ENCODE measurements at regions of chr11 and their contacts with region 1.

Region 1: GRCh38 chr11:122721964-122722266 is 66.4 kb downstream of the UBASH3B start:
- DNase-seq: peak; percentile 52 to 82
- H3K4me3 ChIP-seq: no peak overlapping the region
- H3K27ac ChIP-seq: peak overlapping the region; percentile 41; the same call in 1 of the 2 replicates
- H3K4me1 ChIP-seq: peaks cover 49% of the 10 kb centered on the region
- H3K27me3 ChIP-seq: no peaks in the 10 kb centered on the region
- CTCF ChIP-seq: no peak

Region 2: DNA sequence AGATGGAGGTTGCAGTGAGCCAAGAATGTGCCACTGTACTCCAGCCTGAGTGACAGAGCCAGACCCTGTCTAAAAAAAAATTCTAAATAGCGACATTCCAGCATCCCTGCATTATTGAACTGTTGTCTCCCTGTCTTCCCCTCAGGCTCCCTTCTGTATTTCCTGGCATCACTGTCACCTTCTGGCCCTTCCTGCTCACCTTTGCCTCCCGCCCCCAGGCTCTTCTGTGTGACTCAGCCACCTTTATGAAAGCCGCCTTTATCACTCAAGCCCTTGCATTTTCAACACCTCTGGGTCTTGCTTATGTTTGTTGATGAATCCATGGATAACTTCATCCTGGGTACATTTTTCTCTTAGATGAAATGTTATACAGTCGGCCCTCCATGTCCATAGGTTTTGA is 45.3 kb before region 1 on chr11:
- CTCF ChIA-PET with region 1: no interaction called
- POLR2A ChIA-PET with region 1: no interaction called
- intact Hi-C with region 1: loop called (anchors 1 kb)
- DNase-seq: peak; percentile 87 to 99
- H3K4me3 ChIP-seq: no peak overlapping the region
- H3K27ac ChIP-seq: peak overlapping the region; percentile 91
- H3K4me1 ChIP-seq: peaks cover 79% of the 10 kb centered on the region
- H3K27me3 ChIP-seq: no peaks in the 10 kb centered on the region
- CTCF ChIP-seq: no peak

Region 3: DNA sequence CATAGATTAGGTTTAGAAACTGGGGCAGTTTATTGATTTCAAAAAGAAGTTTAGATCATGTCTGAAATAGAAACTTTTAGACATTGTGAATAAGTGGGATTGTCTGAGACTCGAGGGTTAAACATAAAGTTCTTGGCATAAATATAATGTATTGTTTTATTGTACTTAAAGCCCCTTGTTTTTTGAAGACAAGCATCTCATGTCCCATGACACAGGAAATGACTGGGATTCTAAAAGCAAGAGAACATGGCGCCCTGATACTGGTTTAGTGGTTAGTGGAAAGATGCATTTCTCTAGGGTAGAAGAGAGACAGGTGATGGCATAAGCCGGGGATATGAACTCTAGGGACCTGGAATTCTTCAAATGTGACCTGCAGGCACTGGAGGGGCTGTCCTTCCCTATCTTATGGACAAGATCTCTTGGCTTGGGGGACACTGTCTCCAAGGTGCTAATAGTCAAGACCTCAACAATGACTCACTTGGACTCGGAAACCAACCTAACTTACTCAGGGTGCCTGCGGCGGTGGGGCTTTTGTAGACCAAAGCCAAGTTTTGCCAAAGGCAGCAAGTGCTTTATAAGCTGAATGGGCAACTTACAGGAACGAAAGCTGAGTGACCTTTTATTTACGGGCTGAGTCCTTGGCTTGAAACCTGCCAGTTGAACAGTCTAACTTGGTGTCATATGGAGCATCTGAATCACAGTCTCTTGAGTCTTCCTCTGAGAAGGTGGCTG is 18.2 kb before region 1 on chr11:
- CTCF ChIA-PET with region 1: no interaction called
- POLR2A ChIA-PET with region 1: no interaction called
- intact Hi-C with region 1: loop called (anchors 2 kb)
- DNase-seq: peak in 1 of 2 experiments; percentile 88
- H3K4me3 ChIP-seq: no peak overlapping the region
- H3K27ac ChIP-seq: peak overlapping the region; percentile 12; the same call in 1 of the 2 replicates
- H3K4me1 ChIP-seq: peaks cover 35% of the 10 kb centered on the region
- H3K27me3 ChIP-seq: no peaks in the 10 kb centered on the region
- CTCF ChIP-seq: no peak

Region 4: GRCh38 chr11:122788781-122789535 is 67.0 kb after region 1 on chr11:
- CTCF ChIA-PET with region 1: interaction called, 12 read pairs
- POLR2A ChIA-PET with region 1: no interaction called
- intact Hi-C with region 1: no loop called
- DNase-seq: no peak
- H3K4me3 ChIP-seq: no peak overlapping the region
- H3K27ac ChIP-seq: no peak overlapping the region
- H3K4me1 ChIP-seq: peaks cover 22% of the 10 kb centered on the region
- H3K27me3 ChIP-seq: no peaks in the 10 kb centered on the region
- CTCF ChIP-seq: peak; percentile 59

Region 5: DNA sequence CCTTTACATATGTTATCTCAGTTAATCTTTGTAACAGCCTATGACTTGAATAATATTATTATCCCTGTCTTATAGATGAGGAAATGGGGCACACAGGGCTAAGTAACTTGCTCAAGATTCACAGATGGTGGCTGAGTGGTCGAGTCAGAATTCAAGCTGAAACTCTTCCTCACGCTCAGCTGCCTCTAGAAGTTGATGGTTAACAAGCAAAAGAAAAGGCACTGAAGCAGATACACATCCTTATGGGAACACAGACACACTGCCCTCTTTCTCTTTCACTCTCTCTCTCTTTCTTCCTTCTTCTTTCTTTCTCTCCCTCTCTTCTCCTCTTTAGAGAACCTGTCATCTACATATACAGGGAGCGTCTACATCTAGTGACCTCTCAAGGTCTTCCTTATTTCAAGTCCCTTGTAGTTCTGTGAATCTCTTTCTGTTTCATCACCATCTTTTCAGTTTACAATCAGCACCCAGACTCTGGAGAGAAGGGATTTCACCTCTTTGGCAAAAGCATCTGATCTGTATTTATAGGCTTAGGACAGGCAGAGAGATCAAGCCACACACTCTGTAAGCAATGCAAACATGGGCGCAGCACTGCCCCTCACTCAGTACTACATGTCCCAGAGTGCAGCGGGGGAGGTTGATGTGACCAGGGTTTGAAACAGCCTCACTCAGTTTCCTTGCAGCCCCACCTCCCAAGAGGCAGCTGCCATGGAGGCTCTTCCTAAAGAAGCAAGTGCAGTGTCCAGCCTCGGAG is 783.8 kb after region 1 on chr11:
- CTCF ChIA-PET with region 1: no interaction called
- POLR2A ChIA-PET with region 1: no interaction called
- intact Hi-C with region 1: no loop called
- DNase-seq: no peak
- H3K4me3 ChIP-seq: no peak overlapping the region
- H3K27ac ChIP-seq: no peak overlapping the region
- H3K4me1 ChIP-seq: no peaks in the 10 kb centered on the region
- H3K27me3 ChIP-seq: no peaks in the 10 kb centered on the region
- CTCF ChIP-seq: no peak

Measured in PC-9 (cell line).